ENCODE measurements at regions of chr3 and their contacts with region 1.

Region 1: DNA sequence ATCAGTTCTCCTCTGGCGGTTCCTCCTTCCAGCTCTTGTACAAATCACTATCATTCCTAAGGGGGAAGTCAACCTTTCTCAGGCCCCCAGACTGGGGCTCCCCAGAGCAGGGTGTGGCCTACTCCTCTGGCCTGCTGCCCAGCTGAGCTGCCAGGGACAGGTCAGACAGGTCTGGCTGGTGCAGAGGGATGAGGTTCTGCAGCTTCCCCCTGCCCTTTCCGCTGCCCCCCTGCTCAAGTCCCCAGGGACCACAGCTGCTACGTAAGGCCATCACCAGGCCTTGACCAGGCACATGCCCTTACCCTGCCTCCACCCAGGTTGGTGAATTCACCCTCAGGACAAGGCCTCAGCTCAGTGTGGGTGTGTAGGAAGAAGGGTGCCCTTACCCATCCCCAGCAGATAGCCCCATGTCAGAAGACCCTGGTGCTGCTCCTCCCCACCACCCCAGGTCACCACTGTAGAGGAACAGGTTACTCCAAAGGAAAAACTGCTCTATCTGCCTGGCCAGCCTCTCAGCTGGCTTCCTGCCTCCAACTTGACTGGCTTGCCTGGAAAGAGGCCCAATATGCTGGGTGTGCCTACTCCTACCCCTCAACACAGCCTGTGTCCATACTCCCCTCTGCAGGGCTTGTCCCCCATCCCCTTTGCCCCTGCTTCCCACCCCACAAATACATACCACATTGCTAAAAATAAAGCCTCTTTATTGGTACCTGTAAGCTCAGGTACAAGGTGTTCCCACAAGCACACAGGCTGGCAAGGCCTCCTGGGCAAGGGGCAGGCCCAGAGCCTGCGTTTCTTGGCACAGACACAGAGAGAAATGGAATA is 12.0 kb downstream of the CSRNP1 start:
- DNase-seq: peak; percentile 93
- H3K4me3 ChIP-seq: no peak overlapping the region
- H3K27ac ChIP-seq: peak overlapping the region; percentile 72
- H3K4me1 ChIP-seq: peaks cover 31% of the 10 kb centered on the region
- H3K27me3 ChIP-seq: no peaks in the 10 kb centered on the region
- CTCF ChIP-seq: no peak

Region 2: GRCh38 chr3:39177708-39178332 is 36.4 kb after region 1 on chr3:
- intact Hi-C with region 1: loop called (anchors 5 kb)
- DNase-seq: peak; percentile 87
- H3K4me3 ChIP-seq: peak overlapping the region; percentile 40
- H3K27ac ChIP-seq: peak overlapping the region; percentile 78
- H3K4me1 ChIP-seq: peaks cover 5% of the 10 kb centered on the region
- H3K27me3 ChIP-seq: no peaks in the 10 kb centered on the region
- CTCF ChIP-seq: no peak

Measured in colonic mucosa (tissue), 4 donors.